ENCODE measurements at regions of chr2 and their contacts with region 1.

Region 1: DNA sequence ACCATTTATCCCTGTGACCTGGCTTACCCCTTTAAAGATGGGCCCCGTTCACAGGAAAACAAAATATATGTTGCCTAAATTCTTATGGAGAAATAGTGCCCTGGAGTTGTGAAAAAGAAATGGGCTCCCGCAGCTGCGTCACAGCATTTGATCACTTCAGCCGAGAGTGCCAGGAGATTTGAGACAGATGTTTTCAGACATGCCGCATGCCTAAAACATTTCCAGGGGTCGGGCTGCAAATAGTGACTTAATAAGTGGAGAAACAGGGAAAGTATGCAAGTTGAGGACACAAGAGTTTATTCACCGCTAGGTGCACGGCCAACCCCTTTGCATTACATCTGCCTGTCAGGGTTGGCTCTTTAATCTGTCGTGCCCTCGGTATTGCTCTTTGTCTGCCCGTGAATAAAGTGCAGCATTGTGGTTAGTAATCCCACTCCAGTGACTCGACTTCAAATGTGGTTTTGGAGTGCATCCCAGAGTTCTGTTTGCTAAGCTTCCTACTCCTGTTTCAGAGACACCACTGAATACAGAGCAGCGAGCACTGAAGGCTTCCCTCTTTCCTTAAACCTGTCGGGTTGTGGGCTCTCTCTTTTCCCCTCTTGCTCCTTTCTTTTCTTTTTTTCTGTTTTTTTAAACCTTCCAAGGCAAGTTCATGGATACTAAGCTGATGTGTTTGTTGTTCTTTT is 187.5 kb downstream of the LTBP1 start:
- DNase-seq: peak; percentile 98
- ATAC-seq: peak; percentile 88
- H3K4me3 ChIP-seq: peak overlapping the region; percentile 75
- H3K27ac ChIP-seq: peak overlapping the region; percentile 89
- H3K4me1 ChIP-seq: peaks cover 57% of the 10 kb centered on the region
- H3K27me3 ChIP-seq: no peaks in the 10 kb centered on the region
- CTCF ChIP-seq: peak; percentile 51

Region 2: DNA sequence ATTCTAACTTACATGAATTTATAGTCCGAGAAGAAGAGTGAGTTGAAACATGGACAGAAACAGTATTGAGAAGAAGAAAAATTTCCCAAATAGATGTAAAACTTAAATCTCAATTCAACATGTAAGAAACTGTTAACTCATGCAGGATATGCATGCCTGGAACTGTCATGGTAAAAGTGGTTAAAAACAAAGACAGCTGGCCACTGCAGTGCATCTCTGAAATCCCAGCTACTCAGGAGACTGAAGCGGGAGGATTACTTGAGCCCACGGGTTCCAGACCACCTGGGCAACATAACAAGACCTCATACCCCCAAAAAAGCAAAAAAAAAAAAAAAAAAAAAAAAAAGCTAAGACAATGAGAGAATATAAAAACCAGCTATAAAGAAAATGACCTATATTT is 599.4 kb before region 1 on chr2:
- CTCF ChIA-PET with region 1: no interaction called
- POLR2A ChIA-PET with region 1: no interaction called
- intact Hi-C with region 1: no loop called
- DNase-seq: no peak
- ATAC-seq: no peak
- H3K4me3 ChIP-seq: no peak overlapping the region
- H3K27ac ChIP-seq: no peak overlapping the region
- H3K4me1 ChIP-seq: no peaks in the 10 kb centered on the region
- H3K27me3 ChIP-seq: no peaks in the 10 kb centered on the region
- CTCF ChIP-seq: no peak

Region 3: GRCh38 chr2:33051586-33052360 is 82.5 kb before region 1 on chr2:
- CTCF ChIA-PET with region 1: no interaction called
- POLR2A ChIA-PET with region 1: no interaction called
- intact Hi-C with region 1: loop called (anchors 5 kb)
- DNase-seq: peak; percentile 79
- ATAC-seq: peak; percentile 84
- H3K4me3 ChIP-seq: no peak overlapping the region
- H3K27ac ChIP-seq: peak overlapping the region; percentile 86
- H3K4me1 ChIP-seq: peaks cover 18% of the 10 kb centered on the region
- H3K27me3 ChIP-seq: no peaks in the 10 kb centered on the region
- CTCF ChIP-seq: no peak

Region 4: GRCh38 chr2:33069894-33070651 is 64.2 kb before region 1 on chr2:
- CTCF ChIA-PET with region 1: no interaction called
- POLR2A ChIA-PET with region 1: no interaction called
- intact Hi-C with region 1: loop called (anchors 1 kb)
- DNase-seq: peak; percentile 99
- ATAC-seq: peak; percentile 86
- H3K4me3 ChIP-seq: peak overlapping the region; percentile 19; the same call in 1 of the 2 replicates
- H3K27ac ChIP-seq: peak overlapping the region; percentile 98
- H3K4me1 ChIP-seq: peaks cover 62% of the 10 kb centered on the region
- H3K27me3 ChIP-seq: no peaks in the 10 kb centered on the region
- CTCF ChIP-seq: no peak

Region 5: GRCh38 chr2:33104726-33105125 is 29.5 kb before region 1 on chr2:
- CTCF ChIA-PET with region 1: no interaction called
- POLR2A ChIA-PET with region 1: no interaction called
- intact Hi-C with region 1: loop called (anchors 1 kb)
- DNase-seq: peak; percentile 66
- ATAC-seq: peak; percentile 47
- H3K4me3 ChIP-seq: peak overlapping the region; percentile 5; the same call in 1 of the 2 replicates
- H3K27ac ChIP-seq: peak overlapping the region; percentile 93
- H3K4me1 ChIP-seq: peaks cover 28% of the 10 kb centered on the region
- H3K27me3 ChIP-seq: no peaks in the 10 kb centered on the region
- CTCF ChIP-seq: no peak

Region 6: DNA sequence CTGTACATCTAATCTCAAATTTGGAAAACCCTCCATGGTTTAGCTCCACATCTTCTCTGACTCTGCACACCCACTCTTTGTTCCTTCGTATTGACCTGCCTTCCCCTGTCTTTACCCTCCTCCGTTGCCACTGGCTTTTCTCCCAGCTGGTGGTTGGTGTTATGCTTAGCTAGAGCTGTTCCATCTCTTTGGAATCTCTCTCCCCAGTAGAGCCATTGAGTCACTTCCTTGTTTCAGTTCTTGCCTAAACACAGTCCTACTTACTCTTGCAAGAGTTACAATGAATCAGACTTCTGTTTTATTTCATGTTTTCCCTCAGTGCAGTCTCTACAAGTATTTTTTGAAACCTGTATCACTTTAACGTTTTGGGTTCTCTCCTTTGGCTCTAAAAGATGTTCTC is 76.4 kb after region 1 on chr2:
- CTCF ChIA-PET with region 1: no interaction called
- POLR2A ChIA-PET with region 1: no interaction called
- intact Hi-C with region 1: loop called (anchors 5 kb)
- DNase-seq: peak; percentile 89
- ATAC-seq: peak; percentile 88
- H3K4me3 ChIP-seq: no peak overlapping the region
- H3K27ac ChIP-seq: peak overlapping the region; percentile 80
- H3K4me1 ChIP-seq: peaks cover 28% of the 10 kb centered on the region
- H3K27me3 ChIP-seq: no peaks in the 10 kb centered on the region
- CTCF ChIP-seq: no peak

Region 7: GRCh38 chr2:33229646-33230045 is 95.4 kb after region 1 on chr2:
- CTCF ChIA-PET with region 1: no interaction called
- POLR2A ChIA-PET with region 1: interaction called, 10 read pairs
- intact Hi-C with region 1: loop called (anchors 1 kb)
- DNase-seq: peak; percentile 33
- ATAC-seq: peak; percentile 8; the same call in 1 of the 2 replicates
- H3K4me3 ChIP-seq: no peak overlapping the region
- H3K27ac ChIP-seq: peak overlapping the region; percentile 93
- H3K4me1 ChIP-seq: peaks cover 38% of the 10 kb centered on the region
- H3K27me3 ChIP-seq: no peaks in the 10 kb centered on the region
- CTCF ChIP-seq: peak; percentile 25; the same call in 1 of the 2 replicates